ENCODE measurements at regions of chr1 and their contacts with region 1.

Region 1: DNA sequence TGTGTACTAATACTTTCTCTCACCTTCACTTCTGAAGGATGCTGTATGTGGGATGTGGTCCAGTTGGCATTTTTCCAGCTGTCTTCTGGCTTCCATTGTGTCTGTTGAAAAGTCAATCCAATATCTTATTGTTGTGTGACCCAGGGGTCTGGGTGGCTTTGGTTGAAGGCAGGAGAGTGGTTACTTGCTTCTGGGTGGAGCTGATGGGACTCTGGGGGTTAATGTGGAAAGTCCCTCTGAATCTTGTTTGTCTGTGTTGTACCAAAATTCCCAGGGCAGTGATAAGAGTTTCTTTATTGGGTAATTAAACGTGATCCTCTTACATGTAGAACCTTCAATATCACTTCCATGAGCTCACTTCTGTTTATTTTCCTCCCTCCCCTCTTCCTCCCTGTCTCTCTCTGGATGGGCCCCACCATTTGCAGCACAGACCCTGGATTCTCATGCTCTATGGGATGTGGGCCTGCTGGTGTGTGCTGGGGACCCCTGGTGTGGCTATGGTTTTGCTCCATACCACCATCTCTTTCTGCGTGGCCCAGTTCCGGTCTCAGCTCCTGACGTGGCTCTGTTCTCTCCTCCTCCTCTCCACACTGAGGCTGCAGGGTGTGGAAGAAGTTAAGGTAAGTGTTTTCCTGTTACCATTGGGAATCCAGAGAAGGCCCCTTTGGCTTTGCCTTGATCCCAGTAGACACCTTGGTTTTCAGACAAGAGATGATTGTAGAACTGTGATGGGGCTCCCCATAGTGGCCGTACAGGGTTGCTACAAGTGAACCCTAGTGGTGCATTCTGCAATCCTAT is 71.5 kb downstream of the HHAT start:
- DNase-seq: peak; percentile 3 to 64 (median 22)
- ATAC-seq: peak; percentile 76
- H3K4me3 ChIP-seq: no peak overlapping the region
- H3K4me3 Mint-ChIP-seq: no peak overlapping the region
- H3K27ac ChIP-seq: no peak overlapping the region
- H3K27ac Mint-ChIP-seq: no peak overlapping the region
- H3K4me1 ChIP-seq: peaks cover 12% of the 10 kb centered on the region
- H3K4me1 Mint-ChIP-seq: peaks cover 14% of the 10 kb centered on the region
- H3K27me3 ChIP-seq: no peaks in the 10 kb centered on the region
- H3K27me3 Mint-ChIP-seq: no peaks in the 10 kb centered on the region
- CTCF ChIP-seq: peak; percentile 57

Region 2: GRCh38 chr1:210143465-210144062 is 256.7 kb before region 1 on chr1:
- CTCF ChIA-PET with region 1: no interaction called
- POLR2A ChIA-PET with region 1: no interaction called
- intact Hi-C with region 1: loop called (anchors 5 kb)
- DNase-seq: peak in 10 of 14 experiments; percentile 1 to 33 (median 20)
- ATAC-seq: no peak
- H3K4me3 ChIP-seq: no peak overlapping the region
- H3K4me3 Mint-ChIP-seq: no peak overlapping the region
- H3K27ac ChIP-seq: no peak overlapping the region
- H3K27ac Mint-ChIP-seq: no peak overlapping the region
- H3K4me1 ChIP-seq: no peaks in the 10 kb centered on the region
- H3K4me1 Mint-ChIP-seq: no peaks in the 10 kb centered on the region
- H3K27me3 ChIP-seq: no peaks in the 10 kb centered on the region
- H3K27me3 Mint-ChIP-seq: peaks cover 31% of the 10 kb centered on the region
- CTCF ChIP-seq: peak; percentile 56

Region 3: GRCh38 chr1:210321552-210321951 is 78.7 kb before region 1 on chr1:
- CTCF ChIA-PET with region 1: no interaction called
- POLR2A ChIA-PET with region 1: no interaction called
- intact Hi-C with region 1: no loop called
- DNase-seq: no peak
- ATAC-seq: no peak
- H3K4me3 ChIP-seq: no peak overlapping the region
- H3K4me3 Mint-ChIP-seq: no peak overlapping the region
- H3K27ac ChIP-seq: no peak overlapping the region
- H3K27ac Mint-ChIP-seq: no peak overlapping the region
- H3K4me1 ChIP-seq: no peaks in the 10 kb centered on the region
- H3K4me1 Mint-ChIP-seq: no peaks in the 10 kb centered on the region
- H3K27me3 ChIP-seq: peaks cover 0 to 4% of the 10 kb centered on the region in 2 experiments
- H3K27me3 Mint-ChIP-seq: peaks cover 16% of the 10 kb centered on the region
- CTCF ChIP-seq: no peak

Region 4: GRCh38 chr1:210332719-210333398 is 67.4 kb before region 1 on chr1:
- CTCF ChIA-PET with region 1: no interaction called
- POLR2A ChIA-PET with region 1: no interaction called
- intact Hi-C with region 1: loop called in 1 of 2 experiments (anchors 2 kb)
- DNase-seq: peak in 10 of 14 experiments; percentile 7 to 83 (median 43)
- ATAC-seq: peak; percentile 72
- H3K4me3 ChIP-seq: no peak overlapping the region
- H3K4me3 Mint-ChIP-seq: peak overlapping the region; percentile 22
- H3K27ac ChIP-seq: peak overlapping the region in 1 of 2 donors; percentile 68
- H3K27ac Mint-ChIP-seq: peak overlapping the region; percentile 83
- H3K4me1 ChIP-seq: peaks cover 40% of the 10 kb centered on the region
- H3K4me1 Mint-ChIP-seq: peaks cover 45% of the 10 kb centered on the region
- H3K27me3 ChIP-seq: no peaks in the 10 kb centered on the region
- H3K27me3 Mint-ChIP-seq: no peaks in the 10 kb centered on the region
- CTCF ChIP-seq: no peak

Region 5: GRCh38 chr1:210373885-210374599 is 26.2 kb before region 1 on chr1:
- CTCF ChIA-PET with region 1: interaction called, 14 read pairs
- POLR2A ChIA-PET with region 1: interaction called, 6 read pairs
- intact Hi-C with region 1: no loop called
- DNase-seq: peak; percentile 13 to 84 (median 44)
- ATAC-seq: peak; percentile 85
- H3K4me3 ChIP-seq: no peak overlapping the region
- H3K4me3 Mint-ChIP-seq: no peak overlapping the region
- H3K27ac ChIP-seq: peak overlapping the region in 1 of 2 donors; percentile 49
- H3K27ac Mint-ChIP-seq: peak overlapping the region; percentile 84
- H3K4me1 ChIP-seq: peaks cover 2% of the 10 kb centered on the region
- H3K4me1 Mint-ChIP-seq: peaks cover 14% of the 10 kb centered on the region
- H3K27me3 ChIP-seq: no peaks in the 10 kb centered on the region
- H3K27me3 Mint-ChIP-seq: no peaks in the 10 kb centered on the region
- CTCF ChIP-seq: peak; percentile 65